Endothelial cell of umbilical vein (primary cell): ENCODE measurements at regions of chr1 and their contacts with region 1.

Region 1: GRCh38 chr1:43367904-43368645 is at the start of gene ELOVL1:
- DNase-seq: peak; percentile 89
- H3K4me3 ChIP-seq: peak within 1 kb of the TSS; percentile 70 to 85 (median 72)
- H3K27ac ChIP-seq: peak within 1 kb of the TSS; percentile 57
- H3K4me1 ChIP-seq: peaks cover 30% of the 10 kb centered on the region
- H3K27me3 ChIP-seq: no peaks in the 10 kb centered on the region
- CTCF ChIP-seq: peak in 1 of 2 donors; percentile 38
- POLR2A ChIP-seq: peak; percentile 98
- total RNA-seq, gene ELOVL1: 126 and 134 TPM in 2 replicates

Region 2: DNA sequence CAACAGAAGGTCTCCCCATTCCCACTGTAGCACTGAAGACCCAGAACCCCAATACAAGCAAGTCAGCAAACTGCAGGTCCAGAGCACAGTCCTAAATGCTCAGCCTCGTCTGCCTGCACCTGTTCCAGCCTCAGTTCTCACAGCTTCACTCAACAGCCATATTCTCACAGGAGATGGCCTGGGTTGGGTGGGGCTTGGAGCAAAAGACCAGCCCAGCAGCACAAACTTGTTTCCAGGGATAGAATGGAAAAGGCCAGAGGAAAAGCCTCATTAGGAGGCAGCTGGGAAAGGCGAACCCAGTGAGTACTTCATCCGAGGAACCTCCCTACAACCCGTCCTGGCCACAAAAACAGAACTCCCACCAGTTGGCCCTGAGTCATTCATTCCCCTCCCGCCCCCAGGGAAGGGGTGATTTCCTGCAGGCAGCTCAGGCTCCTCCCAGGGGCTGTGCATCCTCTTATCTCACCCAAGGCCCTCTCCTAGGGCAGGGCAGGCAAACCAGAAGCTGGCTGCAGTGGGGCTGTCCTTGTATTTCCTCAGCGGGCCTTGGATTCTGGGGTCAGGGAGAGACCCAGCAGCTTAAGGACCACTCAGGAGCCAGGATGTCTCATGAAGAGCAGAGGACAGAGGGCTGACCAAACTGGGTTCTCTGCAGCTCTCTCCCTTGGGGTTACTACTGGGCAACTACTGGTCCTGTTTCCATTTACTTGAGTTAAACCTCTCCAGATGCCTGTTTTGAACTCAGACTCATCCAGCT is 37.9 kb before region 1 on chr1:
- CTCF ChIA-PET with region 1: no interaction called
- POLR2A ChIA-PET with region 1: interaction called, 15 read pairs
- dilution Hi-C with region 1: no loop called
- intact Hi-C with region 1: no loop called
- DNase-seq: peak; percentile 89
- H3K4me3 ChIP-seq: no peak overlapping the region
- H3K27ac ChIP-seq: no peak overlapping the region
- H3K4me1 ChIP-seq: peaks cover 10% of the 10 kb centered on the region
- H3K27me3 ChIP-seq: no peaks in the 10 kb centered on the region
- CTCF ChIP-seq: no peak
- POLR2A ChIP-seq: peak; percentile 39

Region 3: GRCh38 chr1:43383449-43383848 is 15.4 kb after region 1 on chr1:
- CTCF ChIA-PET with region 1: interaction called, 17 read pairs
- POLR2A ChIA-PET with region 1: interaction called, 3 read pairs
- dilution Hi-C with region 1: no loop called
- intact Hi-C with region 1: no loop called
- DNase-seq: no peak
- H3K4me3 ChIP-seq: no peak overlapping the region
- H3K27ac ChIP-seq: no peak overlapping the region
- H3K4me1 ChIP-seq: peaks cover 7% of the 10 kb centered on the region
- H3K27me3 ChIP-seq: no peaks in the 10 kb centered on the region
- CTCF ChIP-seq: peak in 1 of 2 donors; percentile 6
- POLR2A ChIP-seq: no peak